ENCODE measurements at regions of chr1 and their contacts with region 1.

Region 1: GRCh38 chr1:94471271-94471670 is 53.1 kb downstream of the ABCD3 start:
- DNase-seq: no peak
- ATAC-seq: no peak
- H3K4me3 ChIP-seq: no peak overlapping the region
- H3K4me3 Mint-ChIP-seq: no peak overlapping the region
- H3K27ac ChIP-seq: no peak overlapping the region
- H3K27ac Mint-ChIP-seq: no peak overlapping the region
- H3K4me1 ChIP-seq: no peaks in the 10 kb centered on the region
- H3K4me1 Mint-ChIP-seq: no peaks in the 10 kb centered on the region
- H3K27me3 ChIP-seq: no peaks in the 10 kb centered on the region
- H3K27me3 Mint-ChIP-seq: no peaks in the 10 kb centered on the region
- CTCF ChIP-seq: no peak

Region 2: DNA sequence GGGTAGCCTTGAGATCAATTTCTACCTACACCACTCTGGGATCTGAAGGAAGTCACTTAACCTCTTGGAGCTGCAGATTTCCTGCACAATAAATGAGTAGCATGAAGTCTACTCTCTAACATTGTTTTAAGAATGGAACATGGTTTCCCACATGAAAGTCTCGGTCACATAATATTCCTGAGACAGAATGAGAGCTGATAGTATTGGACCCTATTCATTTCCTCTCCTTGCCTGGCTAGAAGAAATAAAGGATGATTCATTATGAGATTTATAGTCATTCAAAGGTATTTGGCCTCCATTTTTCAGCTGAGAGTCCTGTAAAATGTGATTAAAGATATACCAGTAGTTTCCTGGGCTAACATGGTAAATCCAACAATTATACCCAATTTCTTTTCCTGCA is 290.6 kb before region 1 on chr1:
- CTCF ChIA-PET with region 1: no interaction called
- POLR2A ChIA-PET with region 1: no interaction called
- intact Hi-C with region 1: no loop called
- DNase-seq: no peak
- ATAC-seq: no peak
- H3K4me3 ChIP-seq: no peak overlapping the region
- H3K4me3 Mint-ChIP-seq: no peak overlapping the region
- H3K27ac ChIP-seq: no peak overlapping the region
- H3K27ac Mint-ChIP-seq: no peak overlapping the region
- H3K4me1 ChIP-seq: no peaks in the 10 kb centered on the region
- H3K4me1 Mint-ChIP-seq: no peaks in the 10 kb centered on the region
- H3K27me3 ChIP-seq: no peaks in the 10 kb centered on the region
- H3K27me3 Mint-ChIP-seq: peaks cover 24% of the 10 kb centered on the region
- CTCF ChIP-seq: no peak

Region 3: DNA sequence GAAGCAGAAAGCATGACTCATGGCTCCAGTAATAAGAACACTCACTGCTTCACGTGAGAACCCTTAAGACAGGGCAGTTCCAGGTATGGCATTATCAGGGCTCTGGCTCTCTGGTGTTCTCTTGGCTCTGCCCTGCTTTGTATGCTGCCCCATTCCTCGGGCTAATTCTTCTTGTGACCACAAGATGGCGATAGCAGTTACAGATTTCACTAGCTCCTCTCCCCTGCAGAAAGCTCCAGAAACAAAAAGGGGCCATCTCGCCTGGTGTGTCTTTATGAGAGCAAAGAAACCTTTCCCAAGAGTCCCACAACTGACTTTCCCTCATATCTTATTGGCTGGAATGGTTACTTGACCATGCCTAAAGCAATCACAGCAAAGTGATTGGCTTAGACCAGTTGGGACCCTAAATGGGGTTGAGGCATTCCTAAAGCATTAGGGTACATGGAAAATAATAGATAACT is 10.2 kb after region 1 on chr1:
- CTCF ChIA-PET with region 1: interaction called, 28 read pairs
- POLR2A ChIA-PET with region 1: no interaction called
- intact Hi-C with region 1: no loop called
- DNase-seq: peak; percentile 69
- ATAC-seq: peak; percentile 79
- H3K4me3 ChIP-seq: no peak overlapping the region
- H3K4me3 Mint-ChIP-seq: no peak overlapping the region
- H3K27ac ChIP-seq: no peak overlapping the region
- H3K27ac Mint-ChIP-seq: no peak overlapping the region
- H3K4me1 ChIP-seq: no peaks in the 10 kb centered on the region
- H3K4me1 Mint-ChIP-seq: no peaks in the 10 kb centered on the region
- H3K27me3 ChIP-seq: no peaks in the 10 kb centered on the region
- H3K27me3 Mint-ChIP-seq: no peaks in the 10 kb centered on the region
- CTCF ChIP-seq: peak; percentile 90